Common myeloid progenitor, CD34-positive (primary cell): ENCODE measurements at regions of chr10 and their contacts with region 1.

Region 1: DNA sequence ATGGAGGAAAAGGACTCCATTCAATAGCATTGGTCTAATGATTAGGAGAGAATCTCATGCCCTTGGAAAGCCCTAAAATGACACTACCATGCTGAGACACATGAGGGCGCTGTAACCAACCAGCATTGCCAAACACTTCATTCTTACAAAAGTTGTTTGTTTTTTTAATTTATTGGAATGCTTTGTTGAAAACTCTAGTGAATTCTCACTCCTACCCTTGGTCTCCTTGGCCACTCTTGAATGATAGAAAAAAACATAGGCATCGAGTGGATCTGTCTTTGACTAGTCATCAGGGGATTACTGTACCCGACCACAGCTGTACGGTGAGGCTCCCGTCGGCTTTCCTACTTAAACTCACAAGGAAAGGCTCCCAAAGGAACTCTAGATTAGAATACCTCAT is 29.3 kb upstream of the ADD3 start:
- DNase-seq: peak; percentile 52 to 71 (median 59)
- H3K4me3 ChIP-seq: no peak overlapping the region
- H3K27ac ChIP-seq: peak overlapping the region in 1 of 2 experiments; percentile 6
- H3K4me1 ChIP-seq: no peaks in the 10 kb centered on the region
- H3K27me3 ChIP-seq: no peaks in the 10 kb centered on the region

Region 2: GRCh38 chr10:109996225-109996624 is 17.7 kb after region 1 on chr10:
- CTCF ChIA-PET with region 1: interaction called, 33 read pairs
- POLR2A ChIA-PET with region 1: no interaction called
- DNase-seq: peak in 2 of 3 donors; percentile 41 to 57
- H3K4me3 ChIP-seq: peak overlapping the region in 1 of 7 experiments; percentile 8
- H3K27ac ChIP-seq: no peak overlapping the region
- H3K4me1 ChIP-seq: peaks cover 4 to 11% (median 9%) of the 10 kb centered on the region in 4 experiments
- H3K27me3 ChIP-seq: no peaks in the 10 kb centered on the region

Region 3: GRCh38 chr10:110013630-110014293 is 35.3 kb after region 1 on chr10:
- CTCF ChIA-PET with region 1: interaction called, 12 read pairs
- POLR2A ChIA-PET with region 1: no interaction called
- DNase-seq: peak in 2 of 3 donors; percentile 42 to 57
- H3K4me3 ChIP-seq: no peak overlapping the region
- H3K27ac ChIP-seq: no peak overlapping the region
- H3K4me1 ChIP-seq: peaks cover 16 to 42% (median 36%) of the 10 kb centered on the region in 4 experiments
- H3K27me3 ChIP-seq: no peaks in the 10 kb centered on the region